MCF 10A (cell line): ENCODE measurements at regions of chr1 and their contacts with region 1.

Region 1: DNA sequence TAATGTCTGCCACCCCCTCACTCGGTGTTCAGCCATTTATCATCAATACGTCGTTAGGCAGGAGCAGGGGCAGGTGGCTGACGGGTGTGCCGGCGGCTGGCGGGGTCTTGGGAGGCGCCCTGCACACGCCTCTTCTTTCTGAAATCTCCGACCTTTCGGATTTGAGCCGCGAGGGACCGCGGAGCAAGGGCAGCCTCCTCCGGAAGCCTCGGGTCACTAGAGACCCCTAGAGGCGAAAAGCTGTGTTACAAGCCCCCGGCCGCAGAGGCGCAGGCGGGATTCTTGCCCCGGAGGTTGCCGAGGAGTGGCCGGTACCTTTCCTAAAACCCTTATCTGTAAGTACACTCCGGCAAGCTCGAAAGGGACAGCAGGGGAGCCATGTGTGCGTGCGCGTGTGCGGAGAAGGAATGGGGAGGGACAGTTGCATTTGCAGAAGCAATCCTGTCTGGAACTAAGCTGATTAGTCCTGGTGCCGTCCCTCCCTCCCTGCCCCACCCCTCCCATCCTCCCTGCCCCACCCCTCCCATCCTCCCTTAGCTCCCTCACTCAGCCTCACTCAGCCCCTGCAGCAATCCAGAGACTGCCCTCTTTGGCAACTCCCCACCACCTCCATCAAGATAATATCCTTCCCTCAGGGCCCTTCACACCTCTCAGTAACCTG is 11.0 kb downstream of the BRINP2 start:
- DNase-seq: peak; percentile 68
- H3K4me3 Mint-ChIP-seq: peak overlapping the region; percentile 56
- H3K27ac Mint-ChIP-seq: no peak overlapping the region
- H3K4me1 Mint-ChIP-seq: peaks cover 8% of the 10 kb centered on the region
- H3K27me3 Mint-ChIP-seq: peaks cover 70% of the 10 kb centered on the region
- CTCF ChIP-seq: peak; percentile 96

Region 2: GRCh38 chr1:176903474-176903873 is 278.3 kb before region 1 on chr1:
- CTCF ChIA-PET with region 1: interaction called, 150 read pairs
- POLR2A ChIA-PET with region 1: no interaction called
- intact Hi-C with region 1: no loop called
- DNase-seq: no peak
- H3K4me3 Mint-ChIP-seq: no peak overlapping the region
- H3K27ac Mint-ChIP-seq: no peak overlapping the region
- H3K4me1 Mint-ChIP-seq: peaks cover 7% of the 10 kb centered on the region
- H3K27me3 Mint-ChIP-seq: peaks cover 71% of the 10 kb centered on the region
- CTCF ChIP-seq: no peak

Region 3: GRCh38 chr1:177001556-177001955 is 180.2 kb before region 1 on chr1:
- CTCF ChIA-PET with region 1: no interaction called
- POLR2A ChIA-PET with region 1: no interaction called
- intact Hi-C with region 1: no loop called
- DNase-seq: no peak
- H3K4me3 Mint-ChIP-seq: no peak overlapping the region
- H3K27ac Mint-ChIP-seq: no peak overlapping the region
- H3K4me1 Mint-ChIP-seq: no peaks in the 10 kb centered on the region
- H3K27me3 Mint-ChIP-seq: peaks cover 7% of the 10 kb centered on the region
- CTCF ChIP-seq: no peak

Region 4: GRCh38 chr1:177164380-177165068 is 17.2 kb before region 1 on chr1 and contains the start of gene ASTN1:
- CTCF ChIA-PET with region 1: interaction called, 34 read pairs
- POLR2A ChIA-PET with region 1: no interaction called
- intact Hi-C with region 1: no loop called
- DNase-seq: no peak
- H3K4me3 Mint-ChIP-seq: peak within 1 kb of the TSS; percentile 41
- H3K27ac Mint-ChIP-seq: no peak within 1 kb of the TSS
- H3K4me1 Mint-ChIP-seq: peaks cover 5% of the 10 kb centered on the region
- H3K27me3 Mint-ChIP-seq: peaks cover 48% of the 10 kb centered on the region
- CTCF ChIP-seq: no peak
- total RNA-seq, gene ASTN1: not detected in 2 replicates

Region 5: DNA sequence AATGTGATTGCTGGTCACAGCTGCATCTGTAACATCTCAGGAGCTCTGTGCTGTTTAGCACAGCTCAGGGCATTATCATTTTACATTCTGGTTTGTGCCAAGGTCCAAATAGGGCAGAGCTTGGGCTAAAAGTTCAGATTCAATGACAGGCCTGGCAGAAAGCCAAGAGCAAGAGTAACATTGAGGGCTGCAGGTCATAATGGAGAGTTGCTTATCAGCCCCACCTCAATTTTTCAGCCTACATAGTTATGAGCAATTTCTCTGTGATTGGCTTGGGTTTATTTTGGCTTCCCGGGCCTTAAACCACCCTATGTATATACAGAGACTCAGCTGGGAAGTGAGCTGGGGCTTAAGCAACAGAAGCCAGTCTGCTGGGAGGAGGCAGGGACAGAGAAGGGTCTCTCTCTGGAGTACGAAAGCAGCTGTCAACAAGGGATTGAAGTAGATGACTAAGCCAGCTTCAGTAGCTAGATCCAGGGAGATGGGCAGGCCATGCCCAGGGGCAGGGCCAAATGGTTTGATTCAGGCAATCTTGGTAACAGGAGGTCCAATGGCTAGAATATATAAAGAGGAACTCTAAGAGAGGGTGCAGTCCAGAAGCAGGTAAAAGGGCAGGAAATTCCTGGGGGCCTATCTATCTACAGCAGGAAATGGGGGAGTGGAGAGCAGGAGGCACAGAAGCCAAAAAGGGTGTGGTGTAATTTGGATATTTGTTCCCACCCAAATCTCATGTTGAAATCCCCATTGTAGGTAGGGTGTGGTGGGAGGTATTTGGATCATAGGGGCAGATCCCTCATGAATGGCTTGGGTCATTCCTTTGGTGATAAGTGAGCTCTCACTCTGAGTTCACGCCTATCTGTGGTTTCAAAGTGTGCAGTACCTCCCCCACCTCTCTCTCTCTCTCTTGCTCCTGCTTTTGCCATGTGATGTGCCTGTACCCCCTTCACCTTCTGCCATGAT is 38.1 kb after region 1 on chr1:
- CTCF ChIA-PET with region 1: interaction called, 10 read pairs
- POLR2A ChIA-PET with region 1: no interaction called
- intact Hi-C with region 1: no loop called
- DNase-seq: peak; percentile 53
- H3K4me3 Mint-ChIP-seq: no peak overlapping the region
- H3K27ac Mint-ChIP-seq: peak overlapping the region; percentile 39
- H3K4me1 Mint-ChIP-seq: peaks cover 11% of the 10 kb centered on the region
- H3K27me3 Mint-ChIP-seq: no peaks in the 10 kb centered on the region
- CTCF ChIP-seq: no peak

Region 6: DNA sequence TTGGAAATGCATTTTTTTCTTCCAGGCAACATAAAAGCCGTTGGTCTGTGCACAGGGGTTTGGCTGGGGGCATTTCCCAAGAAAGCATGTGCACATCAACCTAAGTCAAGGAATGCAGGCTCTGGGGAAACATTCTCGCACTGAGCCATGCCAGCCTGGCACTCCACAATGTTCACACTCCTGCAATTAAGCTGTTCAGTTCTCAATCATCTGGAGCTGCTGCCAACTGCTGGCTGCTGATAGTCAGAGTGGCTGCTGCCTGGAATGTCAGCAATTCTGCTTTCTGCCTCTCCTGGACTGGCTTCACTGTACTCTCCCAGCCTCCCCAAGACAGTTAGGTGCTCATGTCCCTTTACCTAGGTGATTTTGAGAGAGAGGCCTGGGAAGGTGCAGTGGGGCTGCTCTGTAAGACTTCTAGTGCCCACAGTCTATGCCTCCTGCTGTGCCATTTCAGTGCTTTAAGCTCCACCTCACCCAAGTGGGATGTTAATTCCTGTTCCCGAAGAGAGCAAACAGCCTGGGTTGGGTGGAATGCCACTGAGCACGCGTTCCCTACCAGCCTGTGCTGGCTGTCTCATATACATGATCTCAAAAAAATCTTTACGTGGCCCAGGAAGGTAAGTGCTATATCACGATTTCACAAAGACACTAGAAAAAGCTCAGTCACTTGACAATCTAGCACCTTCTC is 120.7 kb after region 1 on chr1:
- CTCF ChIA-PET with region 1: no interaction called
- POLR2A ChIA-PET with region 1: no interaction called
- intact Hi-C with region 1: no loop called
- DNase-seq: no peak
- H3K4me3 Mint-ChIP-seq: no peak overlapping the region
- H3K27ac Mint-ChIP-seq: no peak overlapping the region
- H3K4me1 Mint-ChIP-seq: peaks cover 32% of the 10 kb centered on the region
- H3K27me3 Mint-ChIP-seq: no peaks in the 10 kb centered on the region
- CTCF ChIP-seq: no peak

Region 7: GRCh38 chr1:177355595-177355994 is 173.8 kb after region 1 on chr1:
- CTCF ChIA-PET with region 1: interaction called, 6 read pairs
- POLR2A ChIA-PET with region 1: no interaction called
- intact Hi-C with region 1: loop called (anchors 2 kb)
- DNase-seq: peak; percentile 70
- H3K4me3 Mint-ChIP-seq: no peak overlapping the region
- H3K27ac Mint-ChIP-seq: no peak overlapping the region
- H3K4me1 Mint-ChIP-seq: no peaks in the 10 kb centered on the region
- H3K27me3 Mint-ChIP-seq: peaks cover 22% of the 10 kb centered on the region
- CTCF ChIP-seq: peak; percentile 55